Astrocyte of the cerebellum (primary cell): ENCODE measurements at regions of chr17 and their contacts with region 1.

Region 1: GRCh38 chr17:66906321-66907278 is 57.9 kb upstream of the CACNG4 start:
- DNase-seq: peak; percentile 72
- H3K4me3 ChIP-seq: no peak overlapping the region
- CTCF ChIP-seq: peak; percentile 95

Region 2: GRCh38 chr17:66715745-66716156 is 190.8 kb before region 1 on chr17:
- in situ Hi-C with region 1: loop called (anchors 25 kb)
- DNase-seq: peak; percentile 70
- H3K4me3 ChIP-seq: no peak overlapping the region
- CTCF ChIP-seq: peak; percentile 65